ENCODE measurements at regions of chr9 and their contacts with region 1.

Region 1: GRCh38 chr9:26809795-26810194 is 82.8 kb downstream of the CAAP1 start:
- DNase-seq: no peak

Region 2: GRCh38 chr9:26754509-26755164 is 55.2 kb before region 1 on chr9:
- intact Hi-C with region 1: loop called in 1 of 2 experiments (anchors 10 kb)
- DNase-seq: no peak

Region 3: DNA sequence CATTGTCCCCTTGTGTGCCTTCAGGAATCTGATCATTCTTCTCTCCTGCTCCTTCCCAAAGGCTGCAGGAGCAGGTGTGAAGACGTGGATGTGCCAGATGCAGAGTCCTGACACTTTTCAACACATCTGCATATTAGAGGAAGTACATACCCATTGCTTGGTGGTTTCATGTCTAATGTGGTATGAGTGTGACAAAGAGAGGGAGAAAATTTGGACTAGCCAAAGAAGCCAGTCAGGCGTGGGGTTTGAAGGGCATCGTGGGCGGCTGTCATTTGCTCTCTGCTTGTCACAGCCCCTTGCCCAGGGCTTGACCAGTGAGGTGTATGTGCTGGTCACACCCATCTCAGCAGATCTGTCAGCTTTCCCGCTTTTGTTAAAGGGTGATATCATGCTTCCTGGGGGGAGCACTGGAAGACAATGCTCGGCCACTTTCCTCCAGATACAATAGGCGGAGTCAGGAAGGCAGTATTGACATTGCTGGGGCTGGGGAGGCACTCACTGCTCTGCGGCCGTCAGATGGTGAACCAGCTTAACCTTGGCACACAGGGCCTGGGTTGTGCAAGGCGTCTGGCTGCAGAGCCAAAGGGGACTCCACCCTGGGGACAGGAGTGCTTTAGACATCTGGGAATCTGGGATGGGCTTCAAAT is 307.8 kb after region 1 on chr9:
- intact Hi-C with region 1: no loop called
- DNase-seq: peak; percentile 84

Measured in posterior vena cava (tissue), 2 donors.